ENCODE measurements at regions of chr21 and their contacts with region 1.

Region 1: DNA sequence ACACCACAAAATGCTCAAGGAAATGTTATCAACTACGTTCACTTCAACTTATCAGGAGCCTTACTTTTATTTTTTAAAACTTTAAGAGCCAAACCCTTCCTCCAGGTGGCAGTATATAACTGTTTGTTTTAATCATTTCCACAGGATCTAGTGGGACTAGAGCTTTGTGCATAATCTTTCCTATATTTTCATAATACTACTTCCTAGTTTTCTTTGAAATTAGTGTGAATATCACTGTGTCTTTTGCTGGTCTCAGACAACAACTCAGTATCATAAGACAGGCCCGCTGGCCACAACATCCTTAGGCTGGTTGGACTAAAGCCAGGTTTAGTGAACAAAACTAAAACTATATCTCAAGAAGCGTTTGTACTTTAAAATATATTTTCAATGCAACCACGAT is 145.5 kb downstream of the TIAM1 start:
- DNase-seq: no peak
- H3K4me3 Mint-ChIP-seq: no peak overlapping the region
- H3K27ac Mint-ChIP-seq: no peak overlapping the region
- H3K4me1 Mint-ChIP-seq: peaks cover 39% of the 10 kb centered on the region
- H3K27me3 Mint-ChIP-seq: no peaks in the 10 kb centered on the region

Region 2: DNA sequence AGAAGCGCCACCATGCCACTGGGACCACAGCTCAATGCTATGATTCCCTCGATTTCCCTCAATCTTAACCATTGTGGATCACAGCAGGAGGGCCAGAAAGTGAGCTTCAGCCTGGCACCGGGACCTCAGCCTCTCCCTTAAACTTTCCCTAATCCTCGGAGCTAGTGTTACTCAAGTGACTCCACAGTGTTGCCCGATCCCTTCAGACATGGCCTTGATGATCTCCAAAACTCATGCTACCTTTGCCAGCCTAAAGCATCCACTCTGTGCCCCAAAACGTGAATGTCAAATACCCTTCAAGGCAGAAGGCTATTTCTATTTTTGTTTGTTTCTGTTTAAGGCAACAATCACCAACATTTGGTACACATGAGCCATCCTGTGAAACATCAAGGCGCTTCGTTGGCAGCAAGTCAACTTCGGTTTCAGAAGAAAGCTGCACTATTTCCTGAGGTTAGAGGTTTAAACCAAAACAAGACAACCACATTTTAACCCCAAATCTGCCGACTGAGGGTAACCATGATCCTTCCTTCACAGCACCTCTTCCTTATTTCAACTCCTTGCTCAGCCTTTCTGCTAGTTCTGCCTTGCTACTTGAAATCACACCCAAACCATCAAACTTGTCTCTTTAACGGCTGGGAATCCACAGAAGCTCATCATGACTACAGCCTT is 65.9 kb before region 1 on chr21:
- intact Hi-C with region 1: loop called (anchors 1 kb)
- DNase-seq: peak; percentile 94
- H3K4me3 Mint-ChIP-seq: peak overlapping the region; percentile 76
- H3K27ac Mint-ChIP-seq: peak overlapping the region; percentile 98
- H3K4me1 Mint-ChIP-seq: peaks cover 64% of the 10 kb centered on the region
- H3K27me3 Mint-ChIP-seq: no peaks in the 10 kb centered on the region

Region 3: DNA sequence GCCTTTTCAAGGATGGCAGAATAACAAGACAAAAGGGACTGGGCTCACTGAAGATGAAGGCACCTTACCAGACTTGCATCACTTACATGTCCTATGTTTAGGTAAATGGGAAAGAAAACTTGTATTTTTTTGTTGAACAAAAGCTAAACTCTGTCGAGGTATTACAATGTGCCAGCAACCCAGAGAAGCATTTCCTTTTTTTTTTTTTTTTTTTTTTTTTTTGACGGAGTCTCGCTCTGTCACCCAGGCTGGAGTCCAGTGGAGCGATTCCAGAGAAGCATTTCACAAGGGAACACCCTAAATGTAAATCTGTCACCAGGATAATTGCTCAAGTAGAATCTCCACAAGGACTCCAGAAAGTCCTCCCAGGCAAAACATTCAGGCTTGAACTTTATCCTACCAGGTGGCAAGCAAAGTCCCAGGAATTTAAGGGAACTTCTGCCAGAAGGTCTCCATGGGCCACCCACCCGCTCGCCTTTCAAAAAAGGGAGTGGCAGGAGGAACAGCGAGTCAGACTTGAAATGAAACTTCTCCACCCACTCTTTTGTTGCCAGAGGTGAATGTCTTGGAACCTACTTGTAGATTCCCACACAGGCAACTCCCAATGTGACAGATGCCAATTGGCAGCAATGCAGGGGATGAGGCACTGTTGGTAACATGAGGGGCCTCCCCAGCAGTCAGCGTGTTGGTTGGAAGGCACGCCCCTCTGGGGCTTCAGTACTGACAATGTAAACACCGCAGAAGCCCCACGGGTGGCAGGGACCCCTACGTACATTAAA is 20.4 kb after region 1 on chr21:
- intact Hi-C with region 1: loop called (anchors 2 kb)
- DNase-seq: no peak
- H3K4me3 Mint-ChIP-seq: peak overlapping the region; percentile 51
- H3K27ac Mint-ChIP-seq: peak overlapping the region; percentile 46
- H3K4me1 Mint-ChIP-seq: peaks cover 17% of the 10 kb centered on the region
- H3K27me3 Mint-ChIP-seq: no peaks in the 10 kb centered on the region

Region 4: DNA sequence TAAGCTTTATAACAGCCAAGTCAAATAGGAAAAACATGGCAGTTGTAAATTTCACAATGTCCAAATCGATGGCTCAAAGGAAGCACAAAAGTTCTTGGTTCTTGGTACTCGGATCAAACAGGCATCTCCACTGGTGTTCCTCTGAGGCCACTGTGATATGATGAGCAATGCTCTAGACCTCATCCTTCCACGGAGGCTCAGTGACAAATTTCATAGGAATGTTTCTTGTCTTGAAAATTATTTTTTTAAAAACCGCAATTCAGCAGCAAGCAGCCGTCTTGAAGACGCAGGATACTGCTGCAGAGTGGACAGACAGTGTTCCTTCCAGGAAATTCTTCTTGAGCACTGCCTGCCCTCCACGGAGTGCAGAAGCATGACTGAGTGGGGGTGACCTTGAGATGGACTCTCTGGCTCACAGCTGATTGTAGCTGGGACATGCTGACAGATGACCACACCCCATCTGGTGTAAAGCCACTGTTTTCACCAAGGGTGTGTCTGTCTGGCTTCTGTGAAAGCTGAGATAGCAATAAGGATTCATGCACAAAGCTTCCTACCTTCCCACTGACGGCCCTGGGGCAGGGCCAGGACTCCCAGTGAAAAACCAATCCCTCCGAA is 83.6 kb after region 1 on chr21:
- intact Hi-C with region 1: no loop called
- DNase-seq: no peak
- H3K4me3 Mint-ChIP-seq: no peak overlapping the region
- H3K27ac Mint-ChIP-seq: peak overlapping the region; percentile 16
- H3K4me1 Mint-ChIP-seq: peaks cover 19% of the 10 kb centered on the region
- H3K27me3 Mint-ChIP-seq: no peaks in the 10 kb centered on the region

Region 5: DNA sequence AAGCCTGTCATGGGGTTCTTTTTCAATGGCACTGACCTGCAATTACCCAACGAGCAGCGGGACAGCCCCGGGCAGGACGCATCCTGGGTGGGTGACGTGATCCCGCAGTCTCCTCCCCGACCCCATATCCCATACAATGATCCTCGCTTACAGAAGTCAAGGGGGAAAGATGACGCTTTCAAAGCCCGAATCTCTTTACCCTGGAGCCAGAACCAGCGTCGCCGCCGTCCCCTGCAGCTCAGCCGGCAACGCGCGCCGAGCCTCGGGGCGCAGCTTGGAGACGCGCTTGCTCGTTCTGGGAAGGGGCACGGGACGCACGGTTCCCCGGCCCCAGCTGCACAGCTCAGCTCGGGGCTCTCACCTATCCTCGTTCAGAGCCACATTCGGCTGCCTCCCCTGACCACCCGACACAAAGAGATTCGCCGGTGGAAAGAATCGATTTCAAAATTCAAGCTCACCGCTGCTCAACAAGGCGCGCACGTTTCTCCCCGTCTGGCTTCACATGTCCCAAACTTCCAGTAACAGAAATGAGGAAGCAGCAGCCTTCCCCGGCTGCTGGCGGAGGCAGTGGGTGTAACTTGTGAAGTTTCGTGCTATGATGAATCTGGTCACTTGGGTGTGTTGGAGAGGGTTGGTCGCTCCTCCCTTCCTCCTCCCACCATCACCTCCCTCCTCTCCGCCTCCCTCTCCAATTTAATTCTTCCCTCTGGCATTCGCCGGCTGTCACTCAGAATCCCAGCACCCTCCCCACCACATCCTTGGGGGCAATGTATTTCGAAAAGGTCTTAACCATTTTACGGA is 145.3 kb after region 1 on chr21 and contains the start of gene TIAM1:
- intact Hi-C with region 1: loop called (anchors 1 kb)
- DNase-seq: peak; percentile 75
- H3K4me3 Mint-ChIP-seq: peak within 1 kb of the TSS; percentile 97
- H3K27ac Mint-ChIP-seq: peak within 1 kb of the TSS; percentile 90
- H3K4me1 Mint-ChIP-seq: peaks cover 67% of the 10 kb centered on the region
- H3K27me3 Mint-ChIP-seq: peaks cover 17% of the 10 kb centered on the region
- total RNA-seq, gene TIAM1: 104 and 105 TPM in 2 replicates

Region 6: GRCh38 chr21:31426235-31426797 is 227.7 kb after region 1 on chr21:
- intact Hi-C with region 1: loop called (anchors 1 kb)
- DNase-seq: peak; percentile 67
- H3K4me3 Mint-ChIP-seq: peak overlapping the region; percentile 26
- H3K27ac Mint-ChIP-seq: peak overlapping the region; percentile 66
- H3K4me1 Mint-ChIP-seq: peaks cover 16% of the 10 kb centered on the region
- H3K27me3 Mint-ChIP-seq: peaks cover 7% of the 10 kb centered on the region

Region 7: GRCh38 chr21:31558962-31559367 is 360.4 kb after region 1 on chr21:
- intact Hi-C with region 1: loop called (anchors 2 kb)
- DNase-seq: peak; percentile 98
- H3K4me3 Mint-ChIP-seq: peak overlapping the region; percentile 88
- H3K27ac Mint-ChIP-seq: no peak overlapping the region
- H3K4me1 Mint-ChIP-seq: peaks cover 37% of the 10 kb centered on the region
- H3K27me3 Mint-ChIP-seq: peaks cover 30% of the 10 kb centered on the region

Region 8: DNA sequence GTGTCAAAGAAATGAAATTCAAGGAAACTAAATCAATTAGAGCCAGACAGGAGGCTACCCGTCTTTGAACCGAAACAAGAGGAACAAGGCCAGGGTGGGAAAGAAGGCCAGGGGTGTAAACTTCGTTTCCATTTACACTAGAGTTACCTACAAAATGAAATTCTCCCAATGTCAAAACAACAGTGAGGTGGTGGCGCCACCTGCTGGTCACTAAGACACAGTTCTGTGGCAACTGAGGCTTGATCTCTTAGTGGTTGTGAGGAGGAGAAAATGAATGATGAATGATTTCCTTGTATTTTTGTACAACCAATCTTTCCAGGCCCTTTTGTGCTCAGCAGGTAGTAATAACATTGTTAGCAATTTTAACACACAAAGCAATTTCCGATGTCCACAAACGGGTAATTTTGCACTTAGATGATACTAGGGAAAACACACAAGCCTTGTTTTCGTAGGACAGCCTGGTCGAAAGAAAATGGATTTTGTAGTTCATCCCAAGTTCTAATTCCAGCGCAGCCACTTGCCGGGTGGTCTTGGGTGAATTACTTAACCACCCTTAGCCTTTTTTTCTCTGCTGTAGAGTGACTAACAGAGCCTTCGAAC is 406.1 kb after region 1 on chr21:
- intact Hi-C with region 1: loop called (anchors 1 kb)
- DNase-seq: peak; percentile 90
- H3K4me3 Mint-ChIP-seq: no peak overlapping the region
- H3K27ac Mint-ChIP-seq: no peak overlapping the region
- H3K4me1 Mint-ChIP-seq: peaks cover 3% of the 10 kb centered on the region
- H3K27me3 Mint-ChIP-seq: no peaks in the 10 kb centered on the region

Measured in activated CD4-positive, alpha-beta T cell treated with anti-CD3 and anti-CD28 coated beads, Interleukin-2, amount 10 ng/mL, durations not matched to agents 24 days and 14 days (primary cell).